Activated naive CD4-positive, alpha-beta T cell treated with anti-CD3 and anti-CD28 coated beads for 36 hours (primary cell): ENCODE measurements at regions of chr9 and their contacts with region 1.

Region 1: DNA sequence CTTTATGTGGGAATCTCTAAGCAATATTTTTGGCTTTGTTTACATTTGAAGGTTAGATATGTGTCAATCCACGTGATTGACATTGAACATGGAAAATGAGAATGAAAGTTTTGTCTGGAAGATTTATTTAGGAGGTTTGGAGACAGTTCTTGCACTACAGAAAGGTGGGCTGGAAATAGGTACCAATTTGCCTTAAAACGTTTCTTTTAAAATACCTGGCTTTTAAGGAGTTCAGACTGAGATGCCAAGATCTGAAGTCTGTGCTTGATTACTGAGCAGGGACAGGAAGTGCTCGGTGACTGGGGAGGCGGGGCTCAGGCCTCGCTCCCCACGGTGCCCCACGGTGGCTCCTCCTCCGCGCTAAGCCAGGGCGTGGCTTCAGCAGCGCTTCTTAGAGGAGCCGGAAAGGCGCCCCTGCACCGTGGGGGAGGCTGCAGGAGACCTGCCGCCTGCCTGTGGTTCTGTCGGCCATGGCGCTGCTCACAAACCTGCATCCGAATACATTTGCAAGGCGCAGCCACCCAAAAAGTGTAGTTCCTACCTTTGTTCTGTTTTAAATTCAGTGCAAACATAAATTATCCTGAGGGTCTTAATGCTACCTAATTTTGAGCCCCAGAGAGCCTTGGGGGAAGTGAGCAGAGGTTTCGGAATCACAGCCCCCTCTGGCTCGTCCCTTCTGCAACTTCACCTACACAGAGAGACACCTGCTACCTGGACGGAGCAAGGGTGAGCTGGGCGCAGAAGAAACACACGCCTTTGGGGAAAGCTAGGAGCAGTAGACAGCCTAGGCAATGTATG is 49.2 kb downstream of the USP20 start:
- DNase-seq: peak; percentile 98
- H3K4me3 Mint-ChIP-seq: peak overlapping the region; percentile 92
- H3K27ac Mint-ChIP-seq: peak overlapping the region; percentile 99
- H3K4me1 Mint-ChIP-seq: peaks cover 41% of the 10 kb centered on the region
- H3K27me3 Mint-ChIP-seq: no peaks in the 10 kb centered on the region

Region 2: DNA sequence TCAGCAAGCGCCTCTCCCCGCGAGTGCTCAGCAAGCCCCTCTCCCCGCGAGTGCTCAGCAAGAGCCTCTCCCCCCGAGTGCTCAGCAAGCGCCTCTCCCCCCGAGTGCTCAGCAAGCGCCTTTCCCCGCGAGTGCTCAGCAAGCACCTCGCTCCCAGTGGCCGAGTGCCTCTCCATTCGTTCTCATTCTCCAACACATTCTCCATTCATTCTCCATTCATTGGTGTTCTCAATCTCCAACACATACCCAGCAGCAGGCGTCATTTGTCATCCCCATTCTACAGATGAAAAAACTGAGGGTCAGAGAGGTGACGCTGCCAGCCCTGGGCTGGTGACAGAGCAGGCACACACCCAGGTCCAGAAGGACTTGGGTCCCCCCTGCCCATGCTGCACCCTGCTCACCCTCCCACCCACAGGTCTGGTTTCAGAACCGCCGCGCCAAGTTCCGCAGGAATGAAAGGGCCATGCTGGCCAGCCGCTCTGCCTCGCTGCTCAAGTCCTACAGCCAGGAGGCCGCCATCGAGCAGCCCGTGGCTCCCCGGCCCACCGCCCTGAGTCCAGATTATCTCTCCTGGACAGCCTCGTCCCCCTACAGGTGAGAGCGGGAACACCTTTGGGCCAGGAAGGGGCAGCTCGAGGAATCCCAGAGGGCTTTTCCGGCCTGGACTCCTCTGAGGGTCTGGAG is 164.1 kb before region 1 on chr9:
- CTCF ChIA-PET with region 1: no interaction called
- intact Hi-C with region 1: no loop called
- DNase-seq: no peak
- H3K4me3 Mint-ChIP-seq: no peak overlapping the region
- H3K27ac Mint-ChIP-seq: no peak overlapping the region
- H3K4me1 Mint-ChIP-seq: no peaks in the 10 kb centered on the region
- H3K27me3 Mint-ChIP-seq: peaks cover 2% of the 10 kb centered on the region

Region 3: DNA sequence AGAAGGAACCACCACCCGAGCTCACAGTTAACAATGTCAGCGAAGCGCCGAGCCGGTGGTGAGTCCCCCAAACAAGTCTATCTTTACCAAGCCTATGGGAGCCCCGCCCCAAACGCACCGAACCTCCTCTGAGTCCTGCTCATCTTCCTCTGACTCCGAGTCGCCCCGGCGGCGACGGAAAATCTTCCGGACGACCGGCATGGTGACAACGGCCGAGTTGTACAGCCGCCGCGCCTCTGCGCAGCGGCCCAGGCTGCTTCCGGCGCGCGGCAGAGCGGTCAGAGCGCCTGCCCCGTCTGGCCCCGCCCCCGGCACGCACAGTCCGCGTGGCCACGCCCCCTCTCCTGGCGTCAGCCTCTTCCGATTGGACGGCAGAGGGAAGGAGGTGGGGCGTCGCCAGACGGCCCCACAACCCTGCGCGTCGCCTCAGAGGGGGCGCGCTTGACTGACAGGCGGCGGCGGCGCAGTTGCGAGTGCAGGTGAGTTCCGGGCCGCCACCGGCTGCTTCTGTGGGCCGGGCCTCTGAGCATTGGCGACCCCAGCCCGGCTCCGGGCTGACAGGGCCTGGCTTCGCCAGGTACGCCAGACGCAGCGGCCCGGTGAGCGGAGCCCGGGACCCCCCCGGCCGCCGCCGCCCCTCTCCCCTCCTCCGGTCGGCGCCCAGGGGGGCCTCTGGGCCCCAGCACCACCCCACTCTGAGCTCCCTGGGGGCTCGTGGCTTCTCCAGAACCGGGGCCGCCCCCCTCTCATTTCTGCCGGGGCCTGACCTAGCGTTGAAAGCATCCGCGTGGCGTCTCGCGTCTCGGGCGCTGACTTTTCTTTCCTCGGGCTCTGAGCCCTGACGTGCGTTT is 49.2 kb before region 1 on chr9 and contains the starts of genes C9orf78 and USP20:
- CTCF ChIA-PET with region 1: interaction called, 6 read pairs
- intact Hi-C with region 1: loop called (anchors 1 kb)
- DNase-seq: peak; percentile 97
- H3K4me3 Mint-ChIP-seq: peak within 1 kb of the TSS; percentile 97
- H3K27ac Mint-ChIP-seq: peak within 1 kb of the TSS; percentile 94
- H3K4me1 Mint-ChIP-seq: peaks cover 56% of the 10 kb centered on the region
- H3K27me3 Mint-ChIP-seq: no peaks in the 10 kb centered on the region
- total RNA-seq, gene C9orf78: 45.3 to 45.7 TPM
- total RNA-seq, gene USP20: 54.7 to 54.9 TPM

Region 4: DNA sequence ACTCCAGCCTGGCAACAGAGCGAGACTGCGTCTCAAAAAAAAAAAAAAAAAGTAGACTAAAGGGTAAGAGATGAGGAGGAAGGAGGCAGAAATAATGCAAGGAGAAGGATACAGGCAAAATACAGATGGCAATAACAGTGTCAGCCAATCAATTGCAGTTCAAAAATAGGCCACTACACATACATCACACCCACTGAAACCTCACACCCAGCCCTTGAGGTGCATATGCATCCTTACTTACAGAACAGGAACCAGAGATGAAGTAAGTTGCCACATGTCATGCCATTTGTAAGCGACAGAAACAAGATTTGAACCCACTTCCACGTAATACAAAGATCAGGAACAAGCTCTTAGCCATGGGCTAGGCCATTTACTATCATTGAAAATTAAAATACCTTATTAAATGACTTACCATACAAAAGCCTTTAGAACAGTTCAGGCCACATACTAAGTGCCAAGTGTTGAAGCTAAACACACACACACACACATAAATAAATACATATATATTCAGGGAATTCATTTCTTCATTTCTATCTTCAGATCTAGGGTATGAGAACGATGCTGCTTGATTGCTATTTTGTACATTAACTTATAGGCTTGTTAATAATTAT is 60.2 kb after region 1 on chr9:
- CTCF ChIA-PET with region 1: interaction called, 3 read pairs
- intact Hi-C with region 1: loop called (anchors 1 kb)
- DNase-seq: peak; percentile 81
- H3K4me3 Mint-ChIP-seq: no peak overlapping the region
- H3K27ac Mint-ChIP-seq: peak overlapping the region; percentile 82
- H3K4me1 Mint-ChIP-seq: peaks cover 48% of the 10 kb centered on the region
- H3K27me3 Mint-ChIP-seq: no peaks in the 10 kb centered on the region

Region 5: GRCh38 chr9:130010151-130010988 is 126.0 kb after region 1 on chr9:
- CTCF ChIA-PET with region 1: interaction called, 3 read pairs
- intact Hi-C with region 1: loop called (anchors 1 kb)
- DNase-seq: peak; percentile 76
- H3K4me3 Mint-ChIP-seq: peak overlapping the region; percentile 42
- H3K27ac Mint-ChIP-seq: peak overlapping the region; percentile 93
- H3K4me1 Mint-ChIP-seq: peaks cover 81% of the 10 kb centered on the region
- H3K27me3 Mint-ChIP-seq: no peaks in the 10 kb centered on the region

Region 6: GRCh38 chr9:130107234-130107861 is 222.9 kb after region 1 on chr9:
- CTCF ChIA-PET with region 1: interaction called, 11 read pairs
- intact Hi-C with region 1: loop called (anchors 1 kb)
- DNase-seq: peak; percentile 94
- H3K4me3 Mint-ChIP-seq: no peak overlapping the region
- H3K27ac Mint-ChIP-seq: peak overlapping the region; percentile 61
- H3K4me1 Mint-ChIP-seq: peaks cover 43% of the 10 kb centered on the region
- H3K27me3 Mint-ChIP-seq: no peaks in the 10 kb centered on the region

Region 7: GRCh38 chr9:131270171-131271015 is 1386.0 kb after region 1 on chr9:
- CTCF ChIA-PET with region 1: no interaction called
- intact Hi-C with region 1: loop called (anchors 5 kb)
- DNase-seq: peak; percentile 81
- H3K4me3 Mint-ChIP-seq: peak overlapping the region; percentile 96
- H3K27ac Mint-ChIP-seq: peak overlapping the region; percentile 99
- H3K4me1 Mint-ChIP-seq: peaks cover 56% of the 10 kb centered on the region
- H3K27me3 Mint-ChIP-seq: no peaks in the 10 kb centered on the region